Astrocyte of the cerebellum (primary cell): ENCODE measurements at regions of chr10 and their contacts with region 1.

Region 1: DNA sequence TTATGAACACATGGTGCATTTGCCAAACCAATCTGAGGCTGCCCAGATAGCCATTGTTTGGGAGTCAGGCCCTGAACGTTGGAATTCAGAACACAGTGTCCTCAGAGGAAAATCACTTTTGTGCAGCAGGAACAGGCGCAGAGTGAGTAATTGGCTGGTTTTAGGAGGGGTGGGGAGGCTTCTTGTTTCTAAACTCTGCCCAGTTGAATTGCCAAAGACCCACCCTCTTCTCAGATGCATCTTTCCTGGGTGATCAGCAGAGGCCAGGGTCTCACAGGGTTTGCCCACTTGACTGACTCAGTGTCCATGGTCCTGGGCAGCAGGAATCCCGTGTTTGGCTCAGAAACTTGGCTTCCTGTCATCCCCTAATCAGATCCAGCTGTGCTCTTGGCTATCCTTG is 24.3 kb downstream of the PRLHR start:
- DNase-seq: peak; percentile 27
- H3K4me3 ChIP-seq: no peak overlapping the region
- CTCF ChIP-seq: no peak

Region 2: GRCh38 chr10:118430190-118430589 is 140.9 kb before region 1 on chr10:
- in situ Hi-C with region 1: no loop called
- DNase-seq: no peak
- H3K4me3 ChIP-seq: no peak overlapping the region
- CTCF ChIP-seq: no peak

Region 3: GRCh38 chr10:118447478-118448270 is 123.4 kb before region 1 on chr10:
- in situ Hi-C with region 1: no loop called
- DNase-seq: peak; percentile 8
- H3K4me3 ChIP-seq: no peak overlapping the region
- CTCF ChIP-seq: no peak

Region 4: DNA sequence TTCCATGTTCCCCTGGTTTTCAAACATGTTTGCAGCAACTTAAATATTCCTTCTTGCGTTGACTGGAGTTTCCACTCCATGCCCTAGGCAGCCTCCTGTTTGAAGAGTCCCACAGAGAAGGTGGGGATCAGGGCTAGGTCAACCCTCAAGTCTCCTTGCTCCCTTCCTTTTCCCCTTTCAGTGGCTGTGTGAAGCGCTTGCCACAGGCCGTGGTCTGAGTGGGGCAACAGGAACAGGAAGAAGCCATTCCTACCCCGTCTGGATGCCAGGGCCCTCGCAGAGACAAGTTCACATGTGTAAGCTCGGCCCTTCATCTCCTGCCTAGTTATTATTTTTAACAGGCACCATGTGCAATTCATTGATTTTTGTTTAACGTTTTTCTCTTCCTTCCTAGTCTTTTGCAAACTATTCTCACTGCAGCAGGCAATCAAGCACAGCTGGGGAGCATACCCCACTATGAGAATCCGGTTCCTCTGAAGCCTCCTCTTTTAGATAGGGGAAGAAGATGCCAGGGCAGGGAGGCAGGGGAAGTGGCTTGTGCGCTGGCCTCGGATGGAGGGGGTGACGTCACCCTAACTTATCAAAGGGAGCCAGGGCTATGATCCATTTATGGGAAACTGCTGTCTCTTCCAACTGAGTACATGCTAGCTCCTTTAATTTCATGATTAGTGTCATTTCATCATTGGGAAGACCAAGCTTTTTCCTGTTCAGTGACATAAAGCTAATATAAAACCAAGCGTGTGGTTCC is 39.8 kb before region 1 on chr10:
- in situ Hi-C with region 1: no loop called
- DNase-seq: no peak
- H3K4me3 ChIP-seq: no peak overlapping the region
- CTCF ChIP-seq: no peak

Region 5: GRCh38 chr10:118610577-118610976 is 39.5 kb after region 1 on chr10:
- in situ Hi-C with region 1: no loop called
- DNase-seq: no peak
- H3K4me3 ChIP-seq: no peak overlapping the region
- CTCF ChIP-seq: no peak

Region 6: GRCh38 chr10:118712930-118713634 is 142.0 kb after region 1 on chr10:
- in situ Hi-C with region 1: loop called (anchors 5 kb)
- DNase-seq: no peak
- H3K4me3 ChIP-seq: no peak overlapping the region
- CTCF ChIP-seq: peak; percentile 21